Tibial artery (tissue), 4 donors: ENCODE measurements at regions of chr1 and their contacts with region 1.

Region 1: DNA sequence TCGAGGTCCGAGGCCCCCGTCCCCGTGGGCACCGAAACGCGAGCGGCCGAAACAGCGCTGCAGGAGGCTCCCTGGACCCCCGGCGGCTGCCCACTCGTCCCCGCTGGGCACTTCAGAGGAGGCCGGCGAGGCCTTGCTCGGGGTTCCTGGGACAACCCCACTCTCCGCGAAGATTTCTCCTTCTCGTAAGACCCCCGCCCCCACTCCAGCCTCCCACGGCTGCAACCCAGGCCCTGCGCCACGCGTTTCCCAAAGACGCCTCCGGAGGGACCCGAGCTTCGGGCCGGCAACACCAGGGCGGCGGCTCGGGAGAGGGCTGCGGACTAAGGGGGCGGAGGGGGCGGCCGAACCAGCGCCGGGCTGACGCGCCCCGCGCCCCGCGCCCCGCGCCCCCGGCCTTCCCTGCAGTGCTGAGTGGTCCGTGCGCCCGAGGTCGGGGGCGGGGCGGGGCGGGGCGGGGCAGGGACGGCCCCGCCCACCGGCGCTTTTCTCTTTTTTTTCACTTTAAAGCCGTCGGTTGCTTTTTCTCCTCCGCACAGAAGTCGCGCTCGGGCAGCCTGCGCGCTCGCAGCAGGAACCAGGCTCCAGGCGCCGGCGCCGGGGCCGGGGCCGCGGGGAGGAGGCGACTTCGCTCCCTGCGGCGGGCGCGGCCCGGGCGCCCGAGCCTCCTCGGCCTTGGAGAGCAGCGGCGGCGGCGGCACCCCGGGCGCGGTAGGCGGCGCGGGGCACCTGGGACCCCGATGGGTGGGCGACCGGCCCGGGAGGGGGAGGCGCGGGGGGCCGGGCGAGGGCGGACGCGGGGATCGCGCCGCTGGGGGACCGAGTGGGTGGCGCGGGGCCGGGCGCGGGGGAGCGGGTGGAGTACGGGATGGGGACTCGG is at the start of gene SPSB1:
- DNase-seq: peak; percentile 65 to 89
- H3K4me3 ChIP-seq: peak within 1 kb of the TSS; percentile 81 to 92
- H3K27ac ChIP-seq: peak within 1 kb of the TSS; percentile 91 to 98
- H3K4me1 ChIP-seq: peaks cover 6 to 62% (median 48%) of the 10 kb centered on the region in 4 donors
- H3K27me3 ChIP-seq: no peaks in the 10 kb centered on the region
- CTCF ChIP-seq: no peak

Region 2: GRCh38 chr1:9350013-9350908 is 57.7 kb after region 1 on chr1:
- intact Hi-C with region 1: loop called (anchors 10 kb)
- DNase-seq: peak; percentile 62 to 88
- H3K4me3 ChIP-seq: peak overlapping the region in 1 of 2 donors; percentile 6
- H3K27ac ChIP-seq: peak overlapping the region; percentile 75 to 76
- H3K4me1 ChIP-seq: peaks cover 0 to 100% (median 89%) of the 10 kb centered on the region in 4 donors
- H3K27me3 ChIP-seq: no peaks in the 10 kb centered on the region
- CTCF ChIP-seq: no peak

Region 3: GRCh38 chr1:9455487-9456234 is 163.1 kb after region 1 on chr1:
- intact Hi-C with region 1: loop called (anchors 2 kb)
- DNase-seq: peak in 1 of 2 donors; percentile 71
- H3K4me3 ChIP-seq: no peak overlapping the region
- H3K27ac ChIP-seq: peak overlapping the region in 1 of 2 donors; percentile 20
- H3K4me1 ChIP-seq: peaks cover 0 to 26% (median 12%) of the 10 kb centered on the region in 4 donors
- H3K27me3 ChIP-seq: no peaks in the 10 kb centered on the region
- CTCF ChIP-seq: peak; percentile 74 to 76

Region 4: GRCh38 chr1:9494929-9495758 is 202.5 kb after region 1 on chr1:
- intact Hi-C with region 1: loop called (anchors 5 kb)
- DNase-seq: no peak
- H3K4me3 ChIP-seq: peak overlapping the region in 1 of 2 donors; percentile 24
- H3K27ac ChIP-seq: no peak overlapping the region
- H3K4me1 ChIP-seq: peaks cover 0 to 13% (median 6%) of the 10 kb centered on the region in 4 donors
- H3K27me3 ChIP-seq: peaks cover 0 to 14% of the 10 kb centered on the region in 2 donors
- CTCF ChIP-seq: peak; percentile 91 to 95